ENCODE measurements at regions of chr6 and their contacts with region 1.

Region 1: GRCh38 chr6:33126101-33126714 is 50.4 kb downstream of the HLA-DPB1 start:
- DNase-seq: peak; percentile 32
- H3K4me3 Mint-ChIP-seq: no peak overlapping the region
- H3K27ac Mint-ChIP-seq: no peak overlapping the region
- H3K4me1 Mint-ChIP-seq: peaks cover 26% of the 10 kb centered on the region
- H3K27me3 Mint-ChIP-seq: peaks cover 6% of the 10 kb centered on the region

Region 2: GRCh38 chr6:33061987-33062386 is 64.2 kb before region 1 on chr6:
- intact Hi-C with region 1: no loop called
- DNase-seq: no peak
- H3K4me3 Mint-ChIP-seq: no peak overlapping the region
- H3K27ac Mint-ChIP-seq: no peak overlapping the region
- H3K4me1 Mint-ChIP-seq: peaks cover 2% of the 10 kb centered on the region
- H3K27me3 Mint-ChIP-seq: peaks cover 17% of the 10 kb centered on the region

Region 3: DNA sequence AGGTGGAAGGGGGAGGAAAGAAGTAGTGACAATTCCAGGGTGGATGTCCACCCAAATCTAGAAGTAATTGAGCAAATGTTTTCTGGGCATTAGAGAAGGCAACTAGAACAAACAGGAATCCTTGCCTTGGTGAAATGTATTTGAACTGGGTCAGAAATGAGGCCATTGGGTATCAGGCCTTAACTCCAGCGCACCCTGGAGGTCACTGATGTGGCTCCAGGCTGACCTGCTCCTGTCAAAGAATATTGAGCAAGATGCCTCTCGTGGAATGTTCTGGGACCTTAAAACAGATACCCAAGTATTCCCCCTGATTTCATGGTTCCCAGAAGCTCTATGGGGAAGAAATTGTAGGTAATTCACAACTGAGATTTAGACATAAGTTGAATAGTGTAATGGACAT is 43.5 kb before region 1 on chr6:
- intact Hi-C with region 1: no loop called
- DNase-seq: no peak
- H3K4me3 Mint-ChIP-seq: no peak overlapping the region
- H3K27ac Mint-ChIP-seq: no peak overlapping the region
- H3K4me1 Mint-ChIP-seq: peaks cover 13% of the 10 kb centered on the region
- H3K27me3 Mint-ChIP-seq: no peaks in the 10 kb centered on the region

Region 4: GRCh38 chr6:33161354-33162331 is 35.4 kb after region 1 on chr6:
- intact Hi-C with region 1: loop called (anchors 5 kb)
- DNase-seq: peak; percentile 77
- H3K4me3 Mint-ChIP-seq: peak overlapping the region; percentile 83
- H3K27ac Mint-ChIP-seq: peak overlapping the region; percentile 80
- H3K4me1 Mint-ChIP-seq: peaks cover 14% of the 10 kb centered on the region
- H3K27me3 Mint-ChIP-seq: peaks cover under 1% of the 10 kb centered on the region

Measured in activated T-helper 2 cell treated with anti-CD3 and anti-CD28 coated beads, Interferon-gamma antibody, Interleukin-2, Interleukin-4, amounts not matched to agents 10 μg/mL and 5 μg/mL and 100 μg/mL, durations not matched to agents 14 hours and 24 hours and 36 hours (primary cell).